ENCODE measurements at regions of chr12 and their contacts with region 1.

Region 1: DNA sequence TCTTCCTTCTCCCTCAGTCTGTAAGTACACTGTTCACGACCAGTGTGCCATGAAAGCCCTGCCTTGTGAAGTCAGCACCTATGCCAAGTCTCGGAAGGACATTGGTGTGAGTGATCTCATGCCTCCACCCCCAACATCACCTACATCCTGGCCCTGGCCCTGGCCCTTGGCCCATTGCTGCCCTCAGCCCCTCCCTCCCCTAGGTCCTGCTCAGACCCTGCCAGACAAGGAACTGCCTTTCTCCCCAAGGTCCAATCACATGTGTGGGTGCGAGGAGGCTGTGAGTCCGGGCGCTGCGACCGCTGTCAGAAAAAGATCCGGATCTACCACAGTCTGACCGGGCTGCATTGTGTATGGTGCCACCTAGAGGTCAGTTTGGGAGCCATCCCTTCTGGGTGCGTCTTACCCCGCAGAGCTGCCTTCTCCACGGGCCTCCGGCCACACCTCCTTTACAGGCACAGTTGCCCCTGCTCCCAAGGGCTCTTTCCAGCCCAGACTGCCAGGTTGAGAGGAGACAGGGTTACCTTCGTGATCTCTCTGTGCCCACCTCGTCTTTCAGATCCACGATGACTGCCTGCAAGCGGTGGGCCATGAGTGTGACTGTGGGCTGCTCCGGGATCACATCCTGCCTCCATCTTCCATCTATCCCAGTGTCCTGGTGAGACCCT is 9.2 kb downstream of the DGKA start:
- DNase-seq: peak; percentile 88
- H3K4me3 ChIP-seq: no peak overlapping the region
- H3K27ac ChIP-seq: peak overlapping the region; percentile 36
- H3K4me1 ChIP-seq: peaks cover 16% of the 10 kb centered on the region
- CTCF ChIP-seq: peak; percentile 95

Region 2: DNA sequence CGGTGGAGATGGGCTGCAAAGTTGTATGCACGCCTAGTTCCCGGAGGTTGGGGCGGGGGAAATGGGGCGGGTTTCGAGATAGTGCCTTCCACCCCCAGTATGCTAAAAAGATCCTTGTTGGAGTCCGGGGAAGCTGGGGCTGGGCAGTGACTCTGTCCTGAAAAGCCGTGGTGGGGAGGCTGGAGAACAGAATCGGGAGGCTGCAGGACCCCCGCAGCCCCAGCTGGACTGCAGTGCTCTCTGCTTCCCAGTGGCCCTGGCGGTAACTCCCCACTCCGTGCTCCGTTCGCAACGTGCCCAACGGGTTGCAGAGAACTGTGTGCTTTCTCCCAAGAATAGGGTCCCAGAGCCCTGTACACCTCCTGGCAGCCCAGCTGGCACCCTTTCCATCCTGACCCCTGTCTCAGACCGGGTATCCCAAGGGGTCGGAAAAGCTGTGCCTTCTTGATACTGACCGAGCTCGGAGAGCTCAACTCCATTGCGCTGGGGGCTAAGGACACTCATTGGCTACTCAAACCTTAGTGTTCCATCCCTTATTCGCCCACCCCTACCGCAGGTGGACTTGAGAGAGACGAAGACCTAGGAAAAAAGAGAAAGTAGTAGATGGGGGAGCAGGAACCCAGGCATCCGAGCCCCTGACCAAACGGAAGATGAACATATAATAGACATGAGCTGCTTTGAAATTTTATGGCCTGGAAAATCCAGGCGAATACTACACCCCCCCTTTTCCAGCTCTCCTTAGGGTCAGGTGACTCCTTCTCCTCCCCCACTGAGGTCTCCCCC is 196.1 kb before region 1 on chr12:
- CTCF ChIA-PET with region 1: no interaction called
- POLR2A ChIA-PET with region 1: no interaction called
- intact Hi-C with region 1: loop called (anchors 1 kb)
- DNase-seq: no peak
- H3K4me3 ChIP-seq: peak overlapping the region; percentile 91
- H3K27ac ChIP-seq: peak overlapping the region; percentile 6
- H3K4me1 ChIP-seq: peaks cover 40% of the 10 kb centered on the region
- CTCF ChIP-seq: no peak